CD14-positive monocyte (primary cell): ENCODE measurements at regions of chr6 and their contacts with region 1.

Region 1: GRCh38 chr6:37059344-37060206 is 54.1 kb downstream of the FGD2 start:
- DNase-seq: peak; percentile 74 to 87 (median 85)
- H3K4me3 ChIP-seq: peak overlapping the region in 1 of 3 experiments; percentile 23
- H3K4me3 Mint-ChIP-seq: peak overlapping the region in 1 of 2 donors; percentile 63
- H3K27ac ChIP-seq: peak overlapping the region; percentile 30 to 71
- H3K27ac Mint-ChIP-seq: peak overlapping the region in 6 of 7 donors; percentile 76 to 95 (median 82)
- H3K4me1 ChIP-seq: peaks cover 16 to 45% of the 10 kb centered on the region in 2 donors
- H3K4me1 Mint-ChIP-seq: peaks cover 29% of the 10 kb centered on the region
- H3K27me3 ChIP-seq: no peaks in the 10 kb centered on the region
- H3K27me3 Mint-ChIP-seq: peaks cover 0 to 7% (median 3%) of the 10 kb centered on the region in 3 donors
- CTCF ChIP-seq: peak; percentile 26

Region 2: DNA sequence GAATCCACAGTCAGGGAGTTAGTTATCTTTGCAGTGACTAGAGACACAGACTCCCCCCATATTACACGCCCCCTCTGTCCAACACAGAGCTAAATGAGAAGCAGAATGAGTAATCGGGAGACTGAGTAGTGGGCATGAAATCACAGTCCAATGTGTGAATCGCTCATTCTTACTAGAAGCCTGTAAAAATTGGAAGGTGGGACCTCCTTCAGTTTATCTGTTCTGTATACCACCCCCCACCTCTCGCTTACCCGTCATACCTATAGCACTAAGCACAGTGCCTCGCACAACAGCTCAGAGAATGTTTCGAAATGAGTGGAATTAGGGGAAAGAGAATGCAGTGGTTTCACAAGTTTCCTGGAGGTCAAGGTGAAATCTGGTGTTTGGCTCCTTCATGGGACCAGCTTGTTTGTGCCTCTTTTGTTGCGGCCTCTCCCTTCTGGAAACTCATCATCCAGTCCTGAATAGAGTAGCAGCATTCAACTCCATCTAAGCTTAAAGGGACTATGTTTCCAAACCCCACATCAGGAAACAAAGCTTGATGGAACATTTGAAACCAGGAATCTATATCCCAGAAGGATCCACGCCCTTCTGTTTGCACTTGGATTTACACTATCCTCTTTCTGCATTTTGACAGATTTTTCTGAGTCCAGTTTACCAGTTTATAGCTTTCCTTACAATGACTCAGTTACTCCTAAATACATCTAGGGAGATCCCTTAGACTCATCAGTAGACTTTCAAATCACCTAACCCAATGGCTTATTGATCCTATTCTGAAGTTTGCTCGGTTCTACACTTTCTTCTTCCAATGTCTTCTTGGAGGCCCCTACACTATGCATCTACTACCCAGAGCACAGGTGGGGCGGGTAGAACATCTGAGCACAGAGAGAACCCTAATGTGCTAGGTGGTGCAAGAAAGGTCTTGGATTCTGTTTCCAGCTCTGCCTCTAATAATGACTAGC is 51.2 kb after region 1 on chr6:
- intact Hi-C with region 1: loop called in 1 of 2 experiments (anchors 10 kb)
- DNase-seq: no peak
- H3K4me3 ChIP-seq: no peak overlapping the region
- H3K4me3 Mint-ChIP-seq: no peak overlapping the region
- H3K27ac ChIP-seq: no peak overlapping the region
- H3K27ac Mint-ChIP-seq: no peak overlapping the region
- H3K4me1 ChIP-seq: peaks cover 0 to 6% of the 10 kb centered on the region in 2 donors
- H3K4me1 Mint-ChIP-seq: peaks cover 3% of the 10 kb centered on the region
- H3K27me3 ChIP-seq: no peaks in the 10 kb centered on the region
- H3K27me3 Mint-ChIP-seq: peaks cover 0 to 6% (median 1%) of the 10 kb centered on the region in 3 donors
- CTCF ChIP-seq: no peak